Activated CD4-positive, alpha-beta T cell treated with anti-CD3 and anti-CD28 coated beads for 36 hours (primary cell): ENCODE measurements at regions of chr6 and their contacts with region 1.

Region 1: DNA sequence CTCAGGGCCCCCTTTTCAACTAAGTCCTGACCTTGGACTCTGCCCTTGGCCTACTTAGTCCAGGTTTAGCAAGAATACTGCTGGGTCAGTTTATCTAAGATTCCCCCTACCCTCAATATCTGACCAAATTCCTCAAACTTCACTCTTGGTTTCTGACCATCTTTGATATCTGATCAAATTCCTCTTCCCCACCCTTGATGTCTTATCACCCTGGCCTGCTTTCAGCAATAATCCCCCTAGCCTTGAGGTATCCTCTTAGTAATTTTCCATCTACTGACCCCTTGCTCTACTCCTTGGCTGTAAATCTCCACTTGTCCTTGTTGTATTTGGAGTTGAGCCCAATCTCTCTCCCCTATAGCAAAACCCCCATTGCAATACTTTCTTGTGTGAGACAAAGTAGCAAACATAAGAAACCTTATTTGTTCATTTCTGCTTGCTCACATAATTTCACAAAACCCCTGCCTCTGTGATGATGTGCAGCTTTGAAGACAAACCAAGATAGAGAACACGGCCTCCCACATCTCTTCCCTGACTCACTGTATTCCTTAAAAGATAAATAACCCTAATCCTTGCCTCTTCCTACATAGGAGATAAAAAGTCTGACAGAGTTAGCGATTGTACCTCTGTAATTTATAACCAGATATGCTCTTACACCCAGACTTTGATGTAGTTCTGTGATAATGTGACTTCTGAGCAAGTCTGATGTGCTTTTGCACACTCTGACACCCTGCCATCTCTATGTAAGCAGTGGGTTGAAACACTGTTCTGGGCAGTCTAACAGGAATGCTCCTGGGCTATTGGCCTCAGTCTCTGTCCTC is 13.8 kb upstream of the IYD start:
- DNase-seq: no peak
- ATAC-seq: no peak
- H3K4me3 Mint-ChIP-seq: no peak overlapping the region
- H3K27ac Mint-ChIP-seq: no peak overlapping the region
- H3K4me1 Mint-ChIP-seq: no peaks in the 10 kb centered on the region
- H3K27me3 Mint-ChIP-seq: peaks cover 2% of the 10 kb centered on the region

Region 2: GRCh38 chr6:150791717-150792116 is 436.8 kb after region 1 on chr6:
- CTCF ChIA-PET with region 1: no interaction called
- POLR2A ChIA-PET with region 1: interaction called, 10 read pairs
- intact Hi-C with region 1: no loop called
- DNase-seq: no peak
- ATAC-seq: no peak
- H3K4me3 Mint-ChIP-seq: no peak overlapping the region
- H3K27ac Mint-ChIP-seq: no peak overlapping the region
- H3K4me1 Mint-ChIP-seq: no peaks in the 10 kb centered on the region
- H3K27me3 Mint-ChIP-seq: peaks cover 3% of the 10 kb centered on the region